B cell (primary cell): ENCODE measurements at regions of chr20 and their contacts with region 1.

Region 1: DNA sequence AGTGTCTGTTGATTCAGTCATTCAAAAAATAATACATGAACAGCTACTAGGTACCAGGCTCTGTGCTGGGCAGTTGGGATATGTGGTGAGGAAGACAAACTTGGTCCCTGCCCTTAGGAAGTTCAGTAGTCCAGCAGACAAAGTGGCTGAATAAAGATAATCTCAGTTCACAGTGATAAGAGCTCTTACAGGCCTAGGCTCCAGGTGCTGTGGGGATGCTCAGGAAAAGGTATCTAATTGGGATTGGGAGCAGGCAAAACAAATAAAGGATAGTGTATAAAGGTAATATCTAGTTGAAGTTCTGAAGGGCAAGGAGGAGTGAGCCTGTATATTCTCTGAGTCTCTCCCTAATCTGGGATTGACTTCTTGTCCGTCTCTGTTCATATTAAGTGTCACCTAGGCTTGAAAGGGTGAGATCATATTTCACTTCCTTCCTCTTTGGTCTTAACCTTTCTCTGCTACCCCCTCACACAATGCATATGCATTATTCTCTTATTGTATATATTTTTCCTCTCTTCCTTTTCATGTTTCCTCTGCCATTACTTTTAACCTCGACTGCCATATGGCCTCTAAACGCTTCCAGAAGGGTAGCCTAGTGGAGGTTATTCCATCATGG is 13.5 kb downstream of the PTPN1 start:
- DNase-seq: peak; percentile 46
- ATAC-seq: peak; percentile 37
- H3K4me3 ChIP-seq: peak overlapping the region in 4 of 5 experiments; percentile 9 to 26 (median 13)
- H3K4me3 Mint-ChIP-seq: peak overlapping the region; percentile 54
- H3K27ac ChIP-seq: peak overlapping the region; percentile 53 to 95
- H3K27ac Mint-ChIP-seq: peak overlapping the region; percentile 88
- H3K4me1 ChIP-seq: peaks cover 94 to 95% of the 10 kb centered on the region in 2 donors
- H3K4me1 Mint-ChIP-seq: peaks cover 51% of the 10 kb centered on the region
- H3K27me3 ChIP-seq: no peaks in the 10 kb centered on the region
- H3K27me3 Mint-ChIP-seq: no peaks in the 10 kb centered on the region
- CTCF ChIP-seq: no peak

Region 2: DNA sequence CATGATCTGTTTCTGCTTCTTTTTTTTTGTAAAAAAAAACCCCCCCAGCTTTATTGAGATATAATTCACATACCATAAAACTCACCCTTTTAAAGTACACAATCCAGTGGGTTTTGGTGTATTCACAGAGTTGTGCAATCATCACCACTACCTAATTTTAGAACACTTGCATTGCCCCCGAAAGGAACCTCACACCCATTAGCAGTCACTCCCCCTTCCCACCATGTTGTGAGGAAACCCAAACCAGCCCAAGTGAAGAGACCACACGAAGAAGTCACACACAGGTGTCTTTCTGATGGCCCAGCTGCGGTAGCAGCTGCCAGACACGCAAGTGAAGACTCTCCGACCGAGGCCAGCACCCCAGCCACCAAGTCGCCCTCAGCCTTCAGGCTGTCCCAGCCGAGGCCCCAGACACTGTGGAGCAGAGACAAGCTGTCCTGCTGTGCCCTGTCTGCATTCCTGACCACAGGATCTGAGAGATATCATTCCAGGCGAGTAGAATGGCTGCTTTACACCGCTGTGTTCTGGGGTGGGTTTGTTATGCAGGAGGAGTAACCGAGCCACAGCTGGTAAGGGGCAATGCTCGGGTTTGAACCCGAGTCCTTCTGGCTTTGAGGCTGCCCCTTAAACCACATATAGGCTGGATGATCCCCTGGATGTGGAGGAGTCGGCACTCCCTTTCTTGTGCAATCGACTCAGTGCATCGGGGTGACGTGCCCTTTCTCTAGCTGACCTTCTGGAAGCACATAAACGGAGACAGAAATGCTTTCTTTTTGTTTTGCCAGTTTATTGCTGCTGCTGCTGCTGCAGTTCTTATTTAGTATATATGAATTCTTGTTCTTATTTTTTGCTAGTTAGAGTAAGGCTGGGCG is 72.5 kb before region 1 on chr20:
- CTCF ChIA-PET with region 1: no interaction called
- POLR2A ChIA-PET with region 1: no interaction called
- intact Hi-C with region 1: no loop called
- DNase-seq: no peak
- ATAC-seq: peak; percentile 39
- H3K4me3 ChIP-seq: no peak overlapping the region
- H3K4me3 Mint-ChIP-seq: peak overlapping the region; percentile 26
- H3K27ac ChIP-seq: no peak overlapping the region
- H3K27ac Mint-ChIP-seq: no peak overlapping the region
- H3K4me1 ChIP-seq: peaks cover 3 to 8% of the 10 kb centered on the region in 2 donors
- H3K4me1 Mint-ChIP-seq: peaks cover 9% of the 10 kb centered on the region
- H3K27me3 ChIP-seq: peaks cover 0 to 34% (median 8%) of the 10 kb centered on the region in 4 experiments
- H3K27me3 Mint-ChIP-seq: peaks cover 73% of the 10 kb centered on the region
- CTCF ChIP-seq: no peak

Region 3: DNA sequence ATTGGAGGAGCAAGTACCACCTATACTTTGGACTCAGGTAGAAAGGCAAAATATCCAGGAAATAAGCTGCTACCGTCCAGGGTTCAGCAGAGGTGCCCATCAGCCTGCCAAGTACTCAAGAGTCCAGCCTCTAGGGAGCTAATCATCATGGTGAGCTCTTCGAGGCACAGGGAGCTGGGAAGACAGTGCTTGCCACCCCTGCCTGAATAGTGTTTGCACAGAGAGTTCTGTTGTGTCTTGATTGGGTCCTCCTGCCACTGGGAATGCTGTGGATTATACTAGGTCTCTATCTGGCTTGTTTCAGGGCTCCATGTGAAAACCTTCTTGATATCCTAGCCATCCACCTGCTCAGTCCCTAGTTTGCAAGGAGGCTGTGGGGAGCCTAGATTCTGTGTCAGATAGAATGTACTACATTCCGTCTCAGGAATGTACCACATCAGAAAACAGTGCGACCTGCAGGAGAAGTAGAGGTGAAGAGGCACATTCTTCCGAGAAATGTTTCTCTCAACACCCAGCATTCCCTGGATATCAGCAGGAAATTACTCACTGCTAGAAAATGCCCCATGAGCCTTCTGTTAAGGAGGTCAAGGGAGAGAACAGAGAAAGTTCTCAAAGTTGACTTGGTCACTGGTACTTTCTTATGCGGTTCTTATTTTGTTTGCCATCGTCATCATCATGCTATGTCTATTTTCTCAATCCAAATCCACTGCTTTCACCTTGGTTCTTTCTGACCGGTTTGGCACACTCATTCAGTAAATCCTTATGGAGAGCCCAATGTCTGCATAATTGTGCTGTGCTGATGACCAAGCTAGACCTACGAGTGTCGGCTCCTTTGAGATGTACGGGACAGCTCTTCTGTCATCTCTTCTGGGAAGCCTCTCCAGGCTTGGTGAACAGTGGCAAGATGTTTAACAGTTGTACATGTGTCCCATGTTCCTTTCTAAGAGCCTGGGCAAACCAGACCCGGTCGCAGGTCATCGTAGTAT is 17.3 kb after region 1 on chr20:
- CTCF ChIA-PET with region 1: interaction called, 79 read pairs
- POLR2A ChIA-PET with region 1: interaction called, 5 read pairs
- intact Hi-C with region 1: loop called (anchors 1 kb)
- DNase-seq: no peak
- ATAC-seq: no peak
- H3K4me3 ChIP-seq: peak overlapping the region in 4 of 5 experiments; percentile 3 to 23 (median 11)
- H3K4me3 Mint-ChIP-seq: peak overlapping the region; percentile 87
- H3K27ac ChIP-seq: peak overlapping the region; percentile 74 to 76
- H3K27ac Mint-ChIP-seq: peak overlapping the region; percentile 97
- H3K4me1 ChIP-seq: peaks cover 73 to 89% of the 10 kb centered on the region in 2 donors
- H3K4me1 Mint-ChIP-seq: peaks cover 76% of the 10 kb centered on the region
- H3K27me3 ChIP-seq: no peaks in the 10 kb centered on the region
- H3K27me3 Mint-ChIP-seq: no peaks in the 10 kb centered on the region
- CTCF ChIP-seq: no peak

Region 4: GRCh38 chr20:50870561-50871161 is 347.0 kb after region 1 on chr20:
- CTCF ChIA-PET with region 1: no interaction called
- POLR2A ChIA-PET with region 1: no interaction called
- intact Hi-C with region 1: no loop called
- DNase-seq: no peak
- ATAC-seq: no peak
- H3K4me3 ChIP-seq: no peak overlapping the region
- H3K4me3 Mint-ChIP-seq: no peak overlapping the region
- H3K27ac ChIP-seq: no peak overlapping the region
- H3K27ac Mint-ChIP-seq: peak overlapping the region; percentile 50
- H3K4me1 ChIP-seq: peaks cover 10 to 32% of the 10 kb centered on the region in 2 donors
- H3K4me1 Mint-ChIP-seq: peaks cover 24% of the 10 kb centered on the region
- H3K27me3 ChIP-seq: no peaks in the 10 kb centered on the region
- H3K27me3 Mint-ChIP-seq: no peaks in the 10 kb centered on the region
- CTCF ChIP-seq: no peak